Activated CD4-positive, alpha-beta memory T cell treated with anti-CD3 and anti-CD28 coated beads, Interleukin-2, amount 10 ng/mL, durations not matched to agents 7 days and 5 days (primary cell): ENCODE measurements at regions of chr12 and their contacts with region 1.

Region 1: GRCh38 chr12:101773650-101774162 is 34.4 kb upstream of the SYCP3 start:
- DNase-seq: peak; percentile 74
- H3K4me3 Mint-ChIP-seq: no peak overlapping the region
- H3K27ac Mint-ChIP-seq: no peak overlapping the region
- H3K4me1 Mint-ChIP-seq: peaks cover 40% of the 10 kb centered on the region
- H3K27me3 Mint-ChIP-seq: no peaks in the 10 kb centered on the region

Region 2: DNA sequence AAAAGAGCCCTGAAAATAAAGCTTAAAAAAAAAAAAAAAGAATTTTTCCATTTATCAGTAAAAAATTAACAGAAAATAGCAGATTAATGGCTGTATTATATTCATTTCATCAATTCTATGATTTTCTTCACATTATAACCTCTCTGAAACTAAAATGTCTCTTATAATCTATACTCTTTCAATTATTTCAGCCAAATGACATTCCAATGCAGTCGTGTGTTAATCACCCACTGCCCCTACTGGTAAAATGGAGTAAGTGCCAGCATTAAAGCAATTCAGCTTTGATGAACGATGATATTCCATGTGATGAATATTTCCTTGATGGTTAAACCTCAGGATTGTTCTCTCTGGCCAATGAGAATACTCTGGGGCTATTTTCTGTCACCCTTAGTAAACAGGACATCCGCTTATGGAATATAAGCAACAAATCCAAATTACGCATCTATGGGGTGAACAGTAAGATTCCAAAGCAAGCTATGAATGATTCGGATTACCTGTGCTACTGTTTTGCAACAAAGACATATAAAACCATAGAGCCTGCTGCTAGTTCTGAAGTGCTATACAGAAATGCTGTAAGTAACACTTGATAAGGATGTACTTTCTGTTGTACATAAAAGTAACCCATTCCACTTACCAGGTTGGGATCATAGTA is 14.2 kb before region 1 on chr12:
- CTCF ChIA-PET with region 1: interaction called, 12 read pairs
- POLR2A ChIA-PET with region 1: no interaction called
- DNase-seq: no peak
- H3K4me3 Mint-ChIP-seq: no peak overlapping the region
- H3K27ac Mint-ChIP-seq: no peak overlapping the region
- H3K4me1 Mint-ChIP-seq: no peaks in the 10 kb centered on the region
- H3K27me3 Mint-ChIP-seq: no peaks in the 10 kb centered on the region

Region 3: GRCh38 chr12:101792051-101792931 is 18.6 kb after region 1 on chr12:
- CTCF ChIA-PET with region 1: interaction called, 31 read pairs
- POLR2A ChIA-PET with region 1: interaction called, 3 read pairs
- DNase-seq: no peak
- H3K4me3 Mint-ChIP-seq: no peak overlapping the region
- H3K27ac Mint-ChIP-seq: peak overlapping the region; percentile 24
- H3K4me1 Mint-ChIP-seq: peaks cover 57% of the 10 kb centered on the region
- H3K27me3 Mint-ChIP-seq: no peaks in the 10 kb centered on the region

Region 4: DNA sequence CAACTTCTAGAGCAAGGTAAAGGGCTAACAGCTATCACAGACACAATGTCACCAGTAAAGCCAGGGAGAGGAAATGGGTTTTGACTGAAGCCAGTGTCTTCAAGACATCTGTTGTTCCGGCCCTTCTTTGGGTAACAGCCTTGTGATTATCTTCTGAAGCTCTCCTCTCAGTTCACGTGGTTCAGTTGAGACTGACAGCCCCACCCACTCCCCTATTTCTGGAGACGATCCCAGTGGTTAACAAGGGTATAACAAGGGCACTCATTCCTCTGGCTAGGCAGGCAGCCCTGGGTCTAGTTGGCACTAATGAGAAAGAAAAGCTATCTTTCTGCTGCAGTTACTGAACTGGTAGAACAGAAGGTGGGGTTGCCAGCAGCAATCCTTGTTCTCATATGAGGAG is 50.2 kb after region 1 on chr12:
- CTCF ChIA-PET with region 1: interaction called, 143 read pairs
- POLR2A ChIA-PET with region 1: interaction called, 19 read pairs
- DNase-seq: peak; percentile 75
- H3K4me3 Mint-ChIP-seq: peak overlapping the region; percentile 15
- H3K27ac Mint-ChIP-seq: peak overlapping the region; percentile 78
- H3K4me1 Mint-ChIP-seq: peaks cover 79% of the 10 kb centered on the region
- H3K27me3 Mint-ChIP-seq: no peaks in the 10 kb centered on the region

Region 5: GRCh38 chr12:101830367-101831325 is 56.9 kb after region 1 on chr12 and contains the start of gene GNPTAB:
- CTCF ChIA-PET with region 1: interaction called, 143 read pairs
- POLR2A ChIA-PET with region 1: interaction called, 19 read pairs
- DNase-seq: peak; percentile 96
- H3K4me3 Mint-ChIP-seq: peak within 1 kb of the TSS; percentile 96
- H3K27ac Mint-ChIP-seq: peak within 1 kb of the TSS; percentile 83
- H3K4me1 Mint-ChIP-seq: peaks cover 44% of the 10 kb centered on the region
- H3K27me3 Mint-ChIP-seq: no peaks in the 10 kb centered on the region
- total RNA-seq, gene GNPTAB: 55.0 to 57.5 TPM

Region 6: GRCh38 chr12:101839324-101840283 is 65.9 kb after region 1 on chr12:
- CTCF ChIA-PET with region 1: interaction called, 125 read pairs
- POLR2A ChIA-PET with region 1: interaction called, 15 read pairs
- DNase-seq: peak; percentile 73
- H3K4me3 Mint-ChIP-seq: no peak overlapping the region
- H3K27ac Mint-ChIP-seq: no peak overlapping the region
- H3K4me1 Mint-ChIP-seq: peaks cover 20% of the 10 kb centered on the region
- H3K27me3 Mint-ChIP-seq: peaks cover 3% of the 10 kb centered on the region

Region 7: GRCh38 chr12:101845137-101845711 is 71.5 kb after region 1 on chr12:
- CTCF ChIA-PET with region 1: interaction called, 125 read pairs
- POLR2A ChIA-PET with region 1: interaction called, 3 read pairs
- DNase-seq: no peak
- H3K4me3 Mint-ChIP-seq: no peak overlapping the region
- H3K27ac Mint-ChIP-seq: no peak overlapping the region
- H3K4me1 Mint-ChIP-seq: peaks cover 4% of the 10 kb centered on the region
- H3K27me3 Mint-ChIP-seq: peaks cover 3% of the 10 kb centered on the region

Region 8: GRCh38 chr12:101876861-101877815 is 103.4 kb after region 1 on chr12 and contains the start of gene DRAM1:
- CTCF ChIA-PET with region 1: no interaction called
- POLR2A ChIA-PET with region 1: no interaction called
- DNase-seq: peak; percentile 81
- H3K4me3 Mint-ChIP-seq: peak within 1 kb of the TSS; percentile 77
- H3K27ac Mint-ChIP-seq: peak within 1 kb of the TSS; percentile 79
- H3K4me1 Mint-ChIP-seq: peaks cover 15% of the 10 kb centered on the region
- H3K27me3 Mint-ChIP-seq: no peaks in the 10 kb centered on the region
- total RNA-seq, gene DRAM1: 4.0 TPM

Region 9: GRCh38 chr12:101962486-101962885 is 188.8 kb after region 1 on chr12:
- CTCF ChIA-PET with region 1: no interaction called
- POLR2A ChIA-PET with region 1: no interaction called
- DNase-seq: no peak
- H3K4me3 Mint-ChIP-seq: no peak overlapping the region
- H3K27ac Mint-ChIP-seq: no peak overlapping the region
- H3K4me1 Mint-ChIP-seq: peaks cover 4% of the 10 kb centered on the region
- H3K27me3 Mint-ChIP-seq: no peaks in the 10 kb centered on the region